ENCODE measurements at regions of chr10 and their contacts with region 1.

Region 1: DNA sequence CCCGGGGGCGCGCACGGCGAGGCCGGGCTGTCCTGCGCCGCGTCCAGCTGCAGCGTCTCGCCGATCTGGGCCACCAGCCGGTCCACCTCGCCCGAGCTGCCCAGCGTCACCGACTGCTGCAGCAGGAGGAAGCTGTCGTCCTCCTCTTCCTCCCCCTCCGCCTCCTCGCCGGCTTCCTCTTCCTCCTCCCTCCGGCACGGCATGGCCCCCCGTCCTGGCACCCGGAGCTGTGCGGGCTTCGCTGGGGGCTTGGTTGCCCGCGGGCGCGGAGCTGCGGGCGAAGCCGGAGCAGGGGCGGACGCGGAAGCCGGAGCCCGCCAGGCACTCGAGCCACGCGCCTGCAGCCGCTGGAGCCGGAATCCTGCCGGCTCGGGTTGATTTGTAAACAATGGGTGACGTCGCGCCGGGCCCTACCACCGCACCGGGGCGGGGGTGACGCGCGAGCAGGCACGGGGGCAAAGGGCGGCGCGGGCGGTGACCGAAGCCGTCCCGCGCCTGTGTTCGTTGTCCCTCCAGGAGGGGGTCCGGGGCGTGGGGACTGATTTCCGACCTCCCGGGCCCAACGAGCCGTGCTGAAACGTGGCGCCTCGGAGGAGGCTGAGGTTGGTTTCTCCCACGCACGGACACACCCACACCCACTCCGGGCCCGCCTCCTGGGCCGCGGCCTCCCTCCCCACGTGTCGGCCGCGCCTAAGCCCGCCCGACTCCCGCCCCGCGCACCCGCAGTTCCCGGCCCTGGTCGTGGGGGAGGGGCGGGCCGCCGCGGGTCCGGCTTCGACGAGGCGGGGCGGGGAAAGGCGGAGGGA is at the start of gene FRAT2:
- DNase-seq: peak; percentile 83 to 94 (median 90)
- H3K4me3 ChIP-seq: peak within 1 kb of the TSS; percentile 81
- H3K4me3 Mint-ChIP-seq: peak within 1 kb of the TSS; percentile 89 to 96 (median 91)
- H3K27ac ChIP-seq: peak within 1 kb of the TSS; percentile 96
- H3K27ac Mint-ChIP-seq: peak within 1 kb of the TSS; percentile 84 to 98 (median 91)
- H3K4me1 ChIP-seq: peaks cover 28% of the 10 kb centered on the region
- H3K4me1 Mint-ChIP-seq: peaks cover 31 to 46% (median 42%) of the 10 kb centered on the region in 3 donors
- H3K27me3 ChIP-seq: no peaks in the 10 kb centered on the region
- H3K27me3 Mint-ChIP-seq: peaks cover 2 to 3% of the 10 kb centered on the region in 2 donors
- total RNA-seq, gene FRAT2: 9.8 to 10.4 TPM

Region 2: DNA sequence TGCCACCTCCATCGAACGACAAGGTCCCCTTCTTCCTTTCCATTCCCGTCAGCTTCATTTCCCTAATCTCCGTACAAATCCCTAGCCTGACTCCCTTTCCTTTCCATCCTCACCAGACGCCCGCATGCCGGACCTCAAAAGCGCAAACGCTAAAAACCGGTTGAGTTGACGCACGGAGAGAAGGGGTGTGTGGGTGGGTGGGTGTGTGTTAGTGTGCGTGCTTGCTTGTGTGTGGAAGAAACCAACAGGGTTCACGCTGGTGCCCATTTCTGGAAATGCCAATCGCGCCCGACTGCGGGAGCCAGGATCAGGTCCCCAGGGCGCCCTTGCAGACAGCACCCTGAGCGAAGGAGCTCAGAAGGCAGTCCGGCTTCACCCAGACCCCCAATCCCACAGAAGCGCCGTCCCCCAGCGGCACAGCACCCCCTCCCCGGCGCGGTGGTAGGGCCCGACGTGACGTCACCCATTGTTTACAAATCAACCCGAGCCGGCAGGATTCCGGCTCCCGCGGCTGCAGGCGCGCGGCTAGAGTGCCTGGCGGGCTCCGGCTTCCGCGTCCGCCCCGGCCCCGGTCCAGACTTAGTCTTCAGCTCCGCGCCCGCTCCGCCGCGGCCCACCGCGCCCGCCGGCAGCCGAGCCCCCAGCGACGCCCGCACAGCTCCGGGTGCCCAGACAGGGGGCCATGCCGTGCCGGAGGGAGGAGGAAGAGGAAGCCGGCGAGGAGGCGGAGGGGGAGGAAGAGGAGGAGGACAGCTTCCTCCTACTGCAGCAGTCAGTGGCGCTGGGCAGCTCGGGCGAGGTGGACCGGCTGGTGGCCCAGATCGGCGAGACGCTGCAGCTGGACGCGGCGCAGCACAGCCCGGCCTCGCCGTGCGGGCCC is 15.6 kb before region 1 on chr10 and contains the start of gene FRAT1:
- CTCF ChIA-PET with region 1: interaction called, 41 read pairs
- POLR2A ChIA-PET with region 1: interaction called, 75 read pairs
- DNase-seq: peak; percentile 86 to 96 (median 94)
- H3K4me3 ChIP-seq: peak within 1 kb of the TSS; percentile 79
- H3K4me3 Mint-ChIP-seq: peak within 1 kb of the TSS; percentile 94 to 99 (median 95)
- H3K27ac ChIP-seq: peak within 1 kb of the TSS; percentile 99
- H3K27ac Mint-ChIP-seq: peak within 1 kb of the TSS; percentile 97 to 100 (median 100)
- H3K4me1 ChIP-seq: peaks cover 23% of the 10 kb centered on the region
- H3K4me1 Mint-ChIP-seq: peaks cover 27 to 34% (median 32%) of the 10 kb centered on the region in 3 donors
- H3K27me3 ChIP-seq: no peaks in the 10 kb centered on the region
- H3K27me3 Mint-ChIP-seq: peaks cover 0 to 1% of the 10 kb centered on the region in 2 donors
- total RNA-seq, gene FRAT1: 4.3 to 4.7 TPM

Region 3: DNA sequence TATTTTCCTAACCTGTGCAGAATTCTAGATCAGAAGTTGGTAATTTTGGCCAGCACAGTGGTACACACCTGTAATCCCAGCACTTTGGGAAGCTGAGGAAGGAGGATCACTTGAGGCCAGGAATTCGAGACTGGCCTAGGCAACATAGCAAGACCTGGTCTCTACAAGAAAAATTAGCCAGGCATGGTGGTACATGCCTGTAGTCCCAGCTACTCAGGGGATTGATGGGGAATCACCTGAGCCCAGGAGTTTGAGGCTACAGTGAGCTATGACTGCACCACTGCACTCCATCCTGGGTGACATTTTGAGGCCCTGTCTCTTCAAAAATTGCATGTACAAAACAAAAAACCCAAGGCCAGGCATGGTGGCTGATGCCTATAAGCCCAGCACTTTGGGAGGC is 100.0 kb after region 1 on chr10:
- CTCF ChIA-PET with region 1: no interaction called
- POLR2A ChIA-PET with region 1: no interaction called
- DNase-seq: no peak
- H3K4me3 ChIP-seq: no peak overlapping the region
- H3K4me3 Mint-ChIP-seq: no peak overlapping the region
- H3K27ac ChIP-seq: no peak overlapping the region
- H3K27ac Mint-ChIP-seq: peak overlapping the region in 2 of 8 donors; percentile 46 to 51
- H3K4me1 ChIP-seq: no peaks in the 10 kb centered on the region
- H3K4me1 Mint-ChIP-seq: peaks cover under 1 to 1% (median under 1%) of the 10 kb centered on the region in 3 donors
- H3K27me3 ChIP-seq: no peaks in the 10 kb centered on the region
- H3K27me3 Mint-ChIP-seq: no peaks in the 10 kb centered on the region

Measured in CD8-positive, alpha-beta memory T cell (primary cell).